RWPE1 (cell line): ENCODE measurements at regions of chr13 and their contacts with region 1.

Region 1: DNA sequence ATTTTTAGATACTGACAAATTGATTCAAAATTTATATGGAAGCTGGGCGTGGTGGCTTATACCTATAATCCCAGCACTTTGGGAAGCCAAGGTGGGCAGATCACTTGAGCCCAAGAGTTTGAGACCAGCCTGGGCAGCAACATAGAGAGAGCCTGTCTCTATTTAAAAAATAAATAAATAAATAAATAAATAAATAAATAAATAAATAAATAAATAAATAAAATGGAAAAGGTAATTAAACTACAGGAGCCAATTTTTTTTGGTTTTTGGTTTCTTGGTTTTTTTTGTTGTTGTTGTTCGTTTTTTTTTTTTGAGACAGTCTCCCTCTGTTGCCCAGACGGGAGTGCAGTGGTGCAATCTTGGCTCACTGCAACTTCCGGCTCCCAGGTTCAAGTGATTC is 29.4 kb upstream of the TRIM13 start:
- DNase-seq: no peak
- H3K27ac ChIP-seq: no peak overlapping the region
- CTCF ChIP-seq: no peak

Region 2: DNA sequence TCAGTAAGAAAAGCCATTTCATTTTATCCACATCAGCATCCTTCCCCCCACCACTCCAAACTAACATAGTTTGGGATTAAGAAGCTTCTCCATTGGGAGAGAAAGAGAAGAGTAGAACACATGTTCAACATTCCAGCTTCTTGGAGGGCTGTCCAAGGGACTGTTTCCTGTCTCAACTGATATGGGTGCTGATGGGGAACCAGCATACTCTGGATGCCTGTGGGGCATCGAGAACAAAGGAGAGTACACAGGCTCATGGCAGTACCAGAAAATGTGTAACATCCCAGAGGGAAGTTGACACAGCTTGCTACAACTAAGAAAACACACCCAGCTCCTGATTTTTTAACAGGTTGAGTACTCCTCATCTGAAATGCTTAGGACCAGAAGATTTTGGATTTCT is 1991.1 kb before region 1 on chr13:
- CTCF ChIA-PET with region 1: no interaction called
- POLR2A ChIA-PET with region 1: interaction called, 10 read pairs
- DNase-seq: no peak
- H3K27ac ChIP-seq: no peak overlapping the region
- CTCF ChIP-seq: no peak